ENCODE measurements at regions of chr1 and their contacts with region 1.

Region 1: DNA sequence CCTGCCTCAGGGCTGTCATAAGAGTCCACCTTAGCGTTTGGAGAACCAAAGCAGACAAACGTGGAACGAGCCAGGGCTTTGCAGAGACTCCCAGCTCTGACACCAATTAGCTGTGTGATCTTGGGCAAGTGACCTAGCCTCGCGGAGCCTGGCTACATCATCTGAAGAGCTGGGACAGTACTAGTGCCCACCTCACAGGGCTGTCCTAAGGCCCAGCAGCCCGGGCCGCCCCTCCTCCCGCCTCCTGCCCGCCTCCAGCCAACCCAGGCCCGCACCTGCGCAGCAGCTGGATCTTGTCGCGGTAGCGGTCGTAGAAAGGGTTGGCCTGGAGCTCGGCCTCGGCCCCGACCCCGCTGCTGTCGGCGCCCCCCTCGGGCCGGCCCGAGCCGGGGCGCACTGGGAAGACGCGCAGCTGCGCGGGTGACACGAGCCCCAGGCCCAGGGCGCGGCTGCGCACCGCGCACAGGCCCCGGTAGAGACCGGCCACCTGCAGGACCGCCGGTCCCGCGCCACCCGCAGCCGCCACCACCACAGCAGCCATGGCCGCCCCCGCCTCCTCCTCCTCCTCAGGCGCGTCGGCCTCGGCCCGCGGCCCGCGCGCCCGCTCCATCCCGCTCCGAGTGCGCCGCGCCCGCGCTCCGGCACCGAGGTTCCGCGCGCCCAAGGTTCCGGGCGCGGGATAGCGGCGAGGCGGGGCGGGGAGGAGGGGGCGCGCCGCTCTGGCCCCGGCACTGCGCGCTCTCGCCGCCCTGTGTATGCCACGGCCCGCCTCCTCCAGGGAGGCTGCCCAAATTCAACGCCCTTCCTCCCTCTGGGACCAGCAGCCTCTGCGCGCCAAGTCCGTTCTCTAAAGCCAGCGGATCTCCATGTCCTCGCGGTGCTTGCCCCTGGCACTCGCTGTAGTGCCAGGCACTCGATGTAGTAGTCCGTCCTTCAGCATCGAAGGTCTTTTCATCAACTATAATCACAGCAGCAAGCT is at the start of gene ATPAF1:
- DNase-seq: peak; percentile 78
- ATAC-seq: peak; percentile 84
- H3K4me3 Mint-ChIP-seq: peak within 1 kb of the TSS; percentile 93
- H3K27ac Mint-ChIP-seq: peak within 1 kb of the TSS; percentile 67
- H3K4me1 Mint-ChIP-seq: peaks cover 15% of the 10 kb centered on the region
- H3K27me3 Mint-ChIP-seq: no peaks in the 10 kb centered on the region
- total RNA-seq, gene ATPAF1: 43.3 to 45.4 TPM

Region 2: DNA sequence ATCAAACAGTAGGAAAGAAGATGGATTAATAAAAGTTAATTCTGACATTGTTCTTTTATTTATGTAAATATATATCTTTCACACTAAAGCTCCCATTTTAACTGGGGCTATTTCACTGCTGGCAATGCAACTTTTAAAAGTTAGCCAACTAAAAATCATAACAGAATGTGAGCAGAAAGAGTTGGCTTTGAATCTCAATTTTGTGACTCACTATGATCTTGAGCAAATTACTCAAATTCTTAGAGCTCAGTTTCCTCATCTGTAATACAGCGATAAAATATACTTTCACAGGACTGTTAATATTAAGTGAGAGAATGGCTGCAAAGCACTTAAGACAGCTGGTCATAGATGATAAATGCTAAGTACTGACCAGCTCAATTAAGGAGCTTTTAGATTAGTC is 40.0 kb after region 1 on chr1:
- POLR2A ChIA-PET with region 1: no interaction called
- DNase-seq: no peak
- ATAC-seq: no peak
- H3K4me3 Mint-ChIP-seq: no peak overlapping the region
- H3K27ac Mint-ChIP-seq: no peak overlapping the region
- H3K4me1 Mint-ChIP-seq: peaks cover 11% of the 10 kb centered on the region
- H3K27me3 Mint-ChIP-seq: no peaks in the 10 kb centered on the region

Region 3: GRCh38 chr1:46718727-46719622 is 50.9 kb after region 1 on chr1 and contains the start of gene EFCAB14:
- POLR2A ChIA-PET with region 1: interaction called, 10 read pairs
- DNase-seq: peak; percentile 100
- ATAC-seq: peak; percentile 99
- H3K4me3 Mint-ChIP-seq: peak within 1 kb of the TSS; percentile 96
- H3K27ac Mint-ChIP-seq: peak within 1 kb of the TSS; percentile 95
- H3K4me1 Mint-ChIP-seq: peaks cover 33% of the 10 kb centered on the region
- H3K27me3 Mint-ChIP-seq: no peaks in the 10 kb centered on the region
- total RNA-seq, gene EFCAB14: 77.4 to 84.2 TPM

Measured in activated naive CD8-positive, alpha-beta T cell treated with anti-CD3 and anti-CD28 coated beads, Interleukin-2, amount 10 ng/mL, durations not matched to agents 7 days and 5 days (primary cell).